Psoas muscle (tissue), 8 donors: ENCODE measurements at regions of chr2 and their contacts with region 1.

Region 1: GRCh38 chr2:104050656-104051242 is 803.2 kb upstream of the POU3F3 start:
- DNase-seq: no peak
- ATAC-seq: no peak
- H3K4me3 ChIP-seq: no peak overlapping the region
- H3K27ac ChIP-seq: no peak overlapping the region
- H3K4me1 ChIP-seq: no peaks in the 10 kb centered on the region
- H3K27me3 ChIP-seq: no peaks in the 10 kb centered on the region
- CTCF ChIP-seq: no peak

Region 2: DNA sequence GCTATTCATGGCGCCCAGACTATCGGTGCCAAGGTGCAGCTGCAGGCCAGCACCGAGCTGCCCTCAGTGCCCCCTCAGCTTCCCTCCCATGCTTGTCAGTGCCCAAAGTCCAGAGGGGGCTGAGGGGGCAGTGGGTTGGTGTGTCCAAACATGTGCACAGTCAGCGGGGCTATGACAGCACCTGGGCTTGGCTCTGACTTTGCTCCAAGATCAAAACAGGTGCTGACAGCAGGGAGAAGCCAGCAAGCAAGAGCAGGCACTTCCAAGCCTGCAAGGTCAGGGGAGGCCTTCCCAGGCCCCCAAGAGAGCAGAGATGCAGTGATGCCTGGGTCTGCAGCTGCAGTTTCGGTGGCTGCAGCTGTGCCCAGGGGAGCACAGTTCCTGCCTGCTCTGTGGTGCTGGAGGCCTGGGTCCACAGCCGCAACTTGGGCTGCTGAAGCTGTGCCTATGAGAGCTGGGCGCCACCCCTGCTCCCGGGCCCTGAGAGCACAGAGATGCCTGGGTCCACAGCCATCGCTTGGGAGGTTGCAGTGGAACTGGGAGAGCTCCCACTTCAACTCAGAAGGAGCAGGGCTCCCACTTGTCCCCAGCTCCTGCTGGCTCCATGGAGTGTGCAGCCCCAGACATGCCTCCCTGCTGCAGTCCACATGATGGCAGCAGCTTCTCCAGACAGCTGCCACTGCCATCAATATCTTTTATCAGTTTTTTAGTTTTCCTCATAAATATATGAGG is 27.8 kb after region 1 on chr2:
- intact Hi-C with region 1: no loop called
- DNase-seq: peak in 1 of 2 donors; percentile 30
- ATAC-seq: no peak
- H3K4me3 ChIP-seq: no peak overlapping the region
- H3K27ac ChIP-seq: no peak overlapping the region
- H3K4me1 ChIP-seq: no peaks in the 10 kb centered on the region
- H3K27me3 ChIP-seq: no peaks in the 10 kb centered on the region
- CTCF ChIP-seq: no peak

Region 3: DNA sequence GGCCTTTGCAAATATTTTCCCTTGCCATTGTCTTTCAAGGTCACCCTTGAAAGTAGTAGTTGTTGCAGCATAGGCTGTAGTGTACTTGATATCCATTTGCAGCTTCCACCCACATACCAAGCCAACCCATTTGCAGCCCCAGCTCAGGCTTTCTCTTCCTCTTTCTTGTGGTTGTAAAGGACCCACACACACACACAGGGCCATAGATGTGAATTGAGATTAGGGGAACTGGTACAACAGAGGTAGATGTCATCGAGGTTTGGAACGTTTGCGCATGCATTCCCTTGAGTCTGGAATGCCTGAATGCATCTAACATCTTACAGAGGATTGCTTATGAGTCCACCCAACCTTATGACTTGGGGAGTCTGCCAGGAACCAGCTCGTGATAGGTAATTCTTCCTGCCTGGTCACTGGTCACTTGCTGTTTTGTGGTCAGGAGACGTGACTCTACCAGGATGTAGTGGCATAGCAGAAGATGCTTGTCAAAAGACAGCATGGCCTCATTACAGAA is 1079.0 kb after region 1 on chr2:
- intact Hi-C with region 1: loop called in 1 of 2 experiments (anchors 10 kb)
- DNase-seq: no peak
- ATAC-seq: no peak
- H3K4me3 ChIP-seq: no peak overlapping the region
- H3K27ac ChIP-seq: no peak overlapping the region
- H3K4me1 ChIP-seq: no peaks in the 10 kb centered on the region
- H3K27me3 ChIP-seq: no peaks in the 10 kb centered on the region
- CTCF ChIP-seq: no peak

Region 4: GRCh38 chr2:105526000-105526925 is 1475.5 kb after region 1 on chr2:
- intact Hi-C with region 1: no loop called
- DNase-seq: no peak
- ATAC-seq: peak in 1 of 4 donors; percentile 37
- H3K4me3 ChIP-seq: no peak overlapping the region
- H3K27ac ChIP-seq: no peak overlapping the region
- H3K4me1 ChIP-seq: no peaks in the 10 kb centered on the region
- H3K27me3 ChIP-seq: no peaks in the 10 kb centered on the region
- CTCF ChIP-seq: no peak